ENCODE measurements at regions of chr15 and their contacts with region 1.

Region 1: GRCh38 chr15:79923515-79924395 is 26.9 kb upstream of the MTHFS start:
- DNase-seq: peak; percentile 99
- ATAC-seq: peak; percentile 94
- H3K4me3 Mint-ChIP-seq: peak overlapping the region; percentile 89
- H3K27ac Mint-ChIP-seq: peak overlapping the region; percentile 94
- H3K4me1 Mint-ChIP-seq: peaks cover 23% of the 10 kb centered on the region
- H3K27me3 Mint-ChIP-seq: no peaks in the 10 kb centered on the region

Region 2: GRCh38 chr15:79310983-79311900 is 612.5 kb before region 1 on chr15 and contains the start of gene TMED3:
- CTCF ChIA-PET with region 1: no interaction called
- POLR2A ChIA-PET with region 1: no interaction called
- intact Hi-C with region 1: loop called in 1 of 2 experiments (anchors 1 kb)
- DNase-seq: peak; percentile 90
- ATAC-seq: peak; percentile 98
- H3K4me3 Mint-ChIP-seq: peak within 1 kb of the TSS; percentile 81
- H3K27ac Mint-ChIP-seq: peak within 1 kb of the TSS; percentile 77
- H3K4me1 Mint-ChIP-seq: peaks cover 28% of the 10 kb centered on the region
- H3K27me3 Mint-ChIP-seq: peaks cover 23% of the 10 kb centered on the region
- total RNA-seq, gene TMED3: 33.5 to 37.2 TPM

Region 3: GRCh38 chr15:79896637-79897379 is 26.9 kb before region 1 on chr15 and contains the start of gene MTHFS:
- CTCF ChIA-PET with region 1: interaction called, 11 read pairs
- POLR2A ChIA-PET with region 1: interaction called, 36 read pairs
- intact Hi-C with region 1: loop called (anchors 1 kb)
- DNase-seq: peak; percentile 87
- ATAC-seq: peak; percentile 81
- H3K4me3 Mint-ChIP-seq: peak within 1 kb of the TSS; percentile 97
- H3K27ac Mint-ChIP-seq: peak within 1 kb of the TSS; percentile 100
- H3K4me1 Mint-ChIP-seq: peaks cover 46% of the 10 kb centered on the region
- H3K27me3 Mint-ChIP-seq: no peaks in the 10 kb centered on the region
- total RNA-seq, gene MTHFS: 36.1 to 48.5 TPM

Region 4: GRCh38 chr15:79948095-79948695 is 24.4 kb after region 1 on chr15:
- CTCF ChIA-PET with region 1: no interaction called
- POLR2A ChIA-PET with region 1: no interaction called
- intact Hi-C with region 1: no loop called
- DNase-seq: no peak
- ATAC-seq: peak; percentile 58
- H3K4me3 Mint-ChIP-seq: no peak overlapping the region
- H3K27ac Mint-ChIP-seq: no peak overlapping the region
- H3K4me1 Mint-ChIP-seq: peaks cover 13% of the 10 kb centered on the region
- H3K27me3 Mint-ChIP-seq: no peaks in the 10 kb centered on the region